Cardiac septum (tissue), 1 donor: ENCODE measurements at regions of chr16 and their contacts with region 1.

Region 1: GRCh38 chr16:22206013-22206841 is at the start of gene EEF2K:
- DNase-seq: peak; percentile 94
- total RNA-seq, gene EEF2K: 16.2 TPM

Region 2: GRCh38 chr16:22250522-22250921 is 44.3 kb after region 1 on chr16:
- intact Hi-C with region 1: no loop called
- DNase-seq: no peak

Region 3: GRCh38 chr16:22297114-22297878 is 91.1 kb after region 1 on chr16 and contains the start of gene POLR3E:
- intact Hi-C with region 1: loop called (anchors 1 kb)
- DNase-seq: peak; percentile 100
- total RNA-seq, gene POLR3E: 32.7 TPM